Caco-2 (cell line): ENCODE measurements at regions of chr17 and their contacts with region 1.

Region 1: DNA sequence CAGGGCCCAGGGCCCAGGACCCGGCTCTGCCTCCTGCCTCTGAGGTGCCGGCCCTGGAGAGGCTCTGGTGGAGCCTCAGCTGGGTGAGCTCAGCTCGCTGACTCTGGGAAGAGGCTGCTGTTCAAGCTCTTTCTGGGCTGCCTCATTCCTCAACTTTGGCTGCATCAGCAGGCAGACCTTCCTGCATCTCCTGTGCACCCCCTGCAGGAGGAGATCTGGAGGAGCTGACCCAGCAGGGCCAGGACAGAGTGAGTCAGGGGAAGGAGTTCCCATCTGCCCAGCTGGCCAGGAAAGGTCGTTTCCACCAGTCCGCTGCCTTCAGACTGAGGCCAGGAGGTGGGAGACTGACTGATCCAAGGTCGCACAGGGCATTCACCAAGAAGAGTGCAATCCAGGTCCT is 10.7 kb downstream of the CRHR1 start:
- DNase-seq: peak in 1 of 2 experiments; percentile 30
- H3K4me3 ChIP-seq: no peak overlapping the region
- H3K4me3 Mint-ChIP-seq: no peak overlapping the region
- H3K27ac Mint-ChIP-seq: no peak overlapping the region
- H3K4me1 ChIP-seq: no peaks in the 10 kb centered on the region; the same call in 1 of the 2 replicates
- H3K4me1 Mint-ChIP-seq: no peaks in the 10 kb centered on the region
- H3K27me3 ChIP-seq: no peaks in the 10 kb centered on the region; the same call in 1 of the 2 replicates
- H3K27me3 Mint-ChIP-seq: peaks cover 20% of the 10 kb centered on the region
- CTCF ChIP-seq: peak in 1 of 2 experiments; percentile 5

Region 2: GRCh38 chr17:45628019-45628418 is 166.8 kb before region 1 on chr17:
- CTCF ChIA-PET with region 1: interaction called, 12 read pairs
- POLR2A ChIA-PET with region 1: no interaction called
- intact Hi-C with region 1: no loop called
- DNase-seq: no peak
- H3K4me3 ChIP-seq: no peak overlapping the region
- H3K4me3 Mint-ChIP-seq: no peak overlapping the region
- H3K27ac Mint-ChIP-seq: no peak overlapping the region
- H3K4me1 ChIP-seq: no peaks in the 10 kb centered on the region
- H3K4me1 Mint-ChIP-seq: no peaks in the 10 kb centered on the region
- H3K27me3 ChIP-seq: no peaks in the 10 kb centered on the region
- H3K27me3 Mint-ChIP-seq: no peaks in the 10 kb centered on the region
- CTCF ChIP-seq: no peak

Region 3: GRCh38 chr17:45719335-45720071 is 75.3 kb before region 1 on chr17:
- CTCF ChIA-PET with region 1: interaction called, 10 read pairs
- POLR2A ChIA-PET with region 1: no interaction called
- intact Hi-C with region 1: no loop called
- DNase-seq: peak in 1 of 2 experiments; percentile 46
- H3K4me3 ChIP-seq: no peak overlapping the region
- H3K4me3 Mint-ChIP-seq: no peak overlapping the region
- H3K27ac Mint-ChIP-seq: no peak overlapping the region
- H3K4me1 ChIP-seq: 0 out of 2 replicates have a peak, but pooled peaks cover 4% of the 10 kb centered on the region
- H3K4me1 Mint-ChIP-seq: no peaks in the 10 kb centered on the region
- H3K27me3 ChIP-seq: no peaks in the 10 kb centered on the region
- H3K27me3 Mint-ChIP-seq: peaks cover 25% of the 10 kb centered on the region
- CTCF ChIP-seq: peak; percentile 35 to 65

Region 4: DNA sequence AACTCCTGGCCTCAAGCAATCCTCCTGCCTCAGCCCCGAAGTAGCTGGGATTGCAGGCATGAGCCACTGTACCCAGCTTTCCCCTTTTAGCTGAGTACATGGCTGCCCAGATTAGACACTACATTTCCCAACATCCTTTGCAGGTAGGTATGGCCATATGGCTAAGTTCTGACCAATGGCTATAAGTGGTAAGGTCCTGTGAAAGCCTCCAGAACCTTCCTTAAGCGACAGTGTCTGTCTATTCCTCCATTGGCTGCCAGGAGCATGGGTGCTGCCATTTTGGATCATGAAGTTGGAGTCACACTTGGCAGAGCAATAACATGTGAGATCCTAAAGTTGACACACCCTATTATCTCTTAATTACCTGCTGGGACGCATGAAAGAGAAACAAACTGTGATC is 35.1 kb before region 1 on chr17:
- CTCF ChIA-PET with region 1: no interaction called
- POLR2A ChIA-PET with region 1: no interaction called
- intact Hi-C with region 1: no loop called
- DNase-seq: peak in 1 of 2 experiments; percentile 36
- H3K4me3 ChIP-seq: no peak overlapping the region
- H3K4me3 Mint-ChIP-seq: no peak overlapping the region
- H3K27ac Mint-ChIP-seq: no peak overlapping the region
- H3K4me1 ChIP-seq: no peaks in the 10 kb centered on the region
- H3K4me1 Mint-ChIP-seq: no peaks in the 10 kb centered on the region
- H3K27me3 ChIP-seq: 0 out of 2 replicates have a peak, but pooled peaks cover 1% of the 10 kb centered on the region
- H3K27me3 Mint-ChIP-seq: peaks cover 23% of the 10 kb centered on the region
- CTCF ChIP-seq: no peak